Activated CD4-positive, alpha-beta memory T cell treated with anti-CD3 and anti-CD28 coated beads for 36 hours (primary cell): ENCODE measurements at regions of chr11 and their contacts with region 1.

Region 1: DNA sequence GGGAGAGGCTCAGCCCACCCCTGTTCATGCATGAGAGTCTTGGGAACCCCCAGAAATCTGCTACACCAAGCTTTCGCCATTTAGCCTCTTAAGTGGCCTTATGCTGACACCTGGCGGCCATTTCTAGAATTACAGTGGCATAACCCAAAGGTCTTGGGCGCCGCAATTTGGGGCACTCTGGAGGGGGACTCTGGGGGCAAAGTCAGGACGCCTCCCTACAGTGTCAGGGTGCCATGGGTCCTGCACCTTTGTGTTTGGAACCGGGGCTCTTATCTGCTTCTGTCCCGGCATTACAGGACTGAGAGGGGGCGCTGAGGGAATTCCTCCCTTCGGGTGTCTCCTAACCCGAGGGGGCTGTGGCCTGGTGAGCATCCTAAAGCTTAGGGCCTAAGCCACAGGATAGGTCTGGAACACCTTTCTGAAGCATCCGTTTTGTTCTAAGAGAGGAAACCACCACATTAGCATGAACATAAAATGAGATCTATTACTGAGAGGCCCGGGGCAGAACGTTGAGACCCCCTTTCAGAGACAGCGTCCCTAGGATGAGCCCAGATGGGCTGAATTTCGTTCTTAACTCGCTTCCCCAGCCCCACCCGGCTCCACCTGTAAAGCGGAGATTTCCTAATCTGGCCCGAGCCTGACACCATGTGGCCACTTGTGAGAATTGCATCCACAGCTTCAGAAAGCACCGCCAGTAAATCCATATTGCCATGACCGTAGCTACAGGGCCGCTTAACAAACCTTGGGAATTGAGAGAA is 9.3 kb downstream of the INS start:
- DNase-seq: peak; percentile 86
- H3K4me3 Mint-ChIP-seq: no peak overlapping the region
- H3K27ac Mint-ChIP-seq: no peak overlapping the region
- H3K4me1 Mint-ChIP-seq: peaks cover 5% of the 10 kb centered on the region
- H3K27me3 Mint-ChIP-seq: peaks cover 32% of the 10 kb centered on the region

Region 2: DNA sequence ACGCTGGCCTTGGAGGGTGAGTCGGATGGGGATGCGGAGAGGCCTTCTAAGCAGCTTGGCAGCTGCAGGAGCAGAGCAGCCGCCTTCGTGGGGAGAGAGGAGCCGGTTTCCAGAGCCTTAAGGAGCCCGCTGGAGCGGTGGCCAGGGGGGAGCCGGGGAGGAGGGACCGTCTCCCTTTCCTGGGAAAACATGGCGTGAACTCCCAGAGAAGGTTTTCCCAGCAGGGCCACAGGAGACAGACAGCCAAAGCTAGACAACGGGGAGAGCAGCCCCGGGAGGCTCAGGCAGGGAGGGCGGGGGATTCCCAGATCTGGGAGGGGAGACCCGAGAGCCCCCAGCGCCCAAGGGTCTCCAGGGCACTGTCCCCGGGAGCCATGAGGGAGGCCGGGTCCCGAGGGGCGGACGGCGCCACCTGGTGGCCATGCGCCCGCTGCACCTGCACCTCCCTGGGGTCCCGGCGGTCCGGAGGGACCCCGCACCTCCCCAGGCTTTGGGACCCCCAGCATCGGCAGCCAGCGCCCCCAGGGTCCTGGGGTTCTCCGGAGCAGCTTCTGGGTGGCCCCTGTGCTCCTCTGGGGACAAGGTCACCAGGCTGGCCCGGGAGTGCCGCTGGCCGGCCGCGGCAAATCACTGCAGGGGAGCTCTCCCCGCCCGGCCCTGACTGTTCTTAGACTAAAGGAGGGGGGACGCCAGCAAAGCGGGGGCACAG is 319.3 kb before region 1 on chr11:
- CTCF ChIA-PET with region 1: interaction called, 43 read pairs
- POLR2A ChIA-PET with region 1: no interaction called
- intact Hi-C with region 1: loop called (anchors 1 kb)
- DNase-seq: peak; percentile 66
- H3K4me3 Mint-ChIP-seq: no peak overlapping the region
- H3K27ac Mint-ChIP-seq: no peak overlapping the region
- H3K4me1 Mint-ChIP-seq: no peaks in the 10 kb centered on the region
- H3K27me3 Mint-ChIP-seq: peaks cover 5% of the 10 kb centered on the region

Region 3: GRCh38 chr11:1882519-1883238 is 269.0 kb before region 1 on chr11:
- CTCF ChIA-PET with region 1: interaction called, 78 read pairs
- POLR2A ChIA-PET with region 1: no interaction called
- intact Hi-C with region 1: loop called (anchors 1 kb)
- DNase-seq: peak; percentile 82
- H3K4me3 Mint-ChIP-seq: no peak overlapping the region
- H3K27ac Mint-ChIP-seq: no peak overlapping the region
- H3K4me1 Mint-ChIP-seq: no peaks in the 10 kb centered on the region
- H3K27me3 Mint-ChIP-seq: no peaks in the 10 kb centered on the region

Region 4: GRCh38 chr11:1953489-1954266 is 198.0 kb before region 1 on chr11:
- CTCF ChIA-PET with region 1: interaction called, 41 read pairs
- POLR2A ChIA-PET with region 1: no interaction called
- intact Hi-C with region 1: no loop called
- DNase-seq: peak; percentile 16
- H3K4me3 Mint-ChIP-seq: no peak overlapping the region
- H3K27ac Mint-ChIP-seq: no peak overlapping the region
- H3K4me1 Mint-ChIP-seq: no peaks in the 10 kb centered on the region
- H3K27me3 Mint-ChIP-seq: no peaks in the 10 kb centered on the region

Region 5: DNA sequence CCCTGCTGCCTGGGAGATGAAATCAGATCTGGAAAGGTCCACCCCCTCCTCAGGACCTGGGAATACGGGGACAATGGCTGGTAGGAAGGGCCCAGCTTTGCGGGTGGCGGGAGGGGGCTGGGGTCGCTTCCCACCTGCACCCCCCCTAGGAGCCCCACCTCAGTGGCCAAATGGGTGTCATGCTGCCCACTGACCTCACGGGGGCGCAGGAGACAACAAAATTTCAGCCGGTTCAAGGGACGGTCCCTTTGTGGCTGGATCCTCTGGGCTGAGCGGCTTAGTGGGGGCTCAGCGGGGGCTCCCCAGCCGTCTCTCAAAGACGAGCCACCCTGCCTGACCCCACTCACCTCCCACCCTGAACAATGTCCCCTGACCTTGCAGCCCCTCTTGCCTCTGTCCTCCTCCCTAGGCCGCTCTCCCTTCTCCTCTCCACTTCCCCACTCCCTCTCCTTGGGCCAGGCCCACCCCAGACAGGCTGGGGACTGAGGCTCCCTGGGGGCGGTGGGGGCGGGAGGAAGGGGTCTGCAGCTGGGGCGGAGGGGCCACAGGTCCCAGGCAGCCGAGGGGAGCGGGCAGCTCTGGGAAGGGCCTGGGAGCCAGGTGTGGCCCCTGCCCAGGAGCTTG is 114.7 kb before region 1 on chr11:
- CTCF ChIA-PET with region 1: interaction called, 738 read pairs
- POLR2A ChIA-PET with region 1: interaction called, 6 read pairs
- intact Hi-C with region 1: no loop called
- DNase-seq: no peak
- H3K4me3 Mint-ChIP-seq: no peak overlapping the region
- H3K27ac Mint-ChIP-seq: no peak overlapping the region
- H3K4me1 Mint-ChIP-seq: no peaks in the 10 kb centered on the region
- H3K27me3 Mint-ChIP-seq: no peaks in the 10 kb centered on the region

Region 6: DNA sequence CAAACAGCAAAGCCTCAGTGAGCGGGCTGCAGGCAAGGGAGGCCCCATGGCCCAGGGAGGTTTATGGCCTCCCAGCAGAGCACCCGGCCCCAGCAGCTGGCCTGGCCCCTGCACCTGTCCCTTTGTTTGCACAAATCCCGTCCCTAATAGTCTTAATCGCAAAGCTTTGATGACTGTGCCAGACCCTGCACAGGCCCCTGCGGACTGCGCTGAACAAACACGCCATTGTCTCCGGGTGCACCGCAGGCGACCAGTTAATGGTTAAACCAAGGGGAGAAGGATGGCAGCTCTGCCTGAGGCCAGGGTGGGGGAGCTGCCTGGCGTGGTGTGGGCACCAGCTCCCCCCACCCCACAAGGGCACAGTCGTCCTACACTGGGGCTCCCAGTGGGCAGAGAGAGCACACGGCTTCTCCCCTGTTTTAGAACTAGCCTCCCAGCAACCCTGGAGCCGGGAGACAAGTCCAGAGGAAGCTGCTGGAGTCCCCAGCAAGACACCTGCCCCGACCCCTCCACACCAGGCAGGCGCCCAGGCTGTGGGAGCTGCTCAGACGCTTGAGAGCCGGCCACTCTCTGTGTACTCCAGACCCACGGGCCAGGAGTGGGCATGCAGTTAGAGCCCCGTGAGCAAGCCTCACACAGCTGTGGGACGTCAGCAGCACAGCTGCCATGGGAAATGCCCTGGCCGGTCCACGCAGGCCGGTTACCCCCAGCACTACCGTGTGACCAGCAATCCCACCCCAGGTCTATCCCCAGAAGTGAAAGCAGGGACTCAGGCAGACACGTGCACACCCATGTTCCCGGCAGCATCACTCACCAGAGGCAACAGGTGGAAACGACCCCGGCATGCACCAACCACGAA is 59.7 kb after region 1 on chr11:
- CTCF ChIA-PET with region 1: no interaction called
- POLR2A ChIA-PET with region 1: no interaction called
- intact Hi-C with region 1: no loop called
- DNase-seq: no peak
- H3K4me3 Mint-ChIP-seq: no peak overlapping the region
- H3K27ac Mint-ChIP-seq: no peak overlapping the region
- H3K4me1 Mint-ChIP-seq: peaks cover 11% of the 10 kb centered on the region
- H3K27me3 Mint-ChIP-seq: no peaks in the 10 kb centered on the region